Endothelial cell of umbilical vein (primary cell): ENCODE measurements at regions of chr12 and their contacts with region 1.

Region 1: GRCh38 chr12:121296618-121297434 is at the start of gene CAMKK2:
- DNase-seq: peak; percentile 80
- H3K4me3 ChIP-seq: peak within 1 kb of the TSS; percentile 77 to 88 (median 77)
- H3K27ac ChIP-seq: peak within 1 kb of the TSS; percentile 63
- H3K4me1 ChIP-seq: peaks cover 16% of the 10 kb centered on the region
- H3K27me3 ChIP-seq: no peaks in the 10 kb centered on the region
- CTCF ChIP-seq: peak; percentile 3 to 21
- POLR2A ChIP-seq: no peak
- total RNA-seq, gene CAMKK2: 41.8 and 45.0 TPM in 2 replicates

Region 2: DNA sequence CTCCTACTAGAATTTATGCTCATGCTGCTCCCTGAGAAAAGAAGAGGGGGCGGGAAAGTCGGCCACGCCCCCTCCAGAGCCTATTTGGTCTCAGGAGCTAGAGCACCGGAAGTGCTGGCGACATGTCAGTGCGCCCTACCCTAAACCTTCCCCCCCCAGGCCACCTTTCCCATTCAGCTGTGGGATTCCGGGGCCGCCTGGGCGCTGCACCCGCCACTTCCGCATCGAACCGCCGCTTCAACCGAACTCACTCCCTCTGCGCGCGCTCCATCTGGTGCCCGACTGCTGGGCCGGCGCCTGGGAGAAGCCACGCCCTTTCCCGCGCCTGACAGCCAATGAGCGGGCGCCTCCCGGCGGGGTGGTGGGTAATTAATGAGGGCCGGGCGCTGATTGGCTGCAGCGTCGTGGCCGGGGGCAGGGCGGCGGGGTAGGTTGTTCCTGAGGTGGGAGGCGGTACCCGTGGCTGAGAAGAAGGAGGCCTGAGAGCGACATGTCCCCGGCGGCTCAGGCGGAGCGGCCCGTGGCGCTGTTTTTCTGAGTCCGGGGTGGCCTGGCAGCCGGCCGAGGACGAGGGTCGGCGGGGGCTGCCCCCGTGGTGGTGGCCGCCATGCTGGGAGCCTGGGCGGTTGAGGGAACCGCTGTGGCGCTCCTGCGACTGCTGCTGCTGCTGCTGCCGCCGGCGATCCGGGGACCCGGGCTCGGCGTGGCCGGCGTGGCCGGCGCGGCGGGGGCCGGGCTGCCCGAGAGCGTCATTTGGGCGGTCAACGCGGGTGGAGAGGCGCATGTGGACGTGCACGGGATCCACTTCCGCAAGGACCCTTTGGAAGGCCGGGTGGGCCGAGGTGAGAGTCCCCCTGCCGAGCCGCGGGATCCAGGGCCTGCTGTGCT is 609.9 kb before region 1 on chr12 and contains the start of gene MLEC:
- CTCF ChIA-PET with region 1: no interaction called
- POLR2A ChIA-PET with region 1: no interaction called
- dilution Hi-C with region 1: no loop called
- intact Hi-C with region 1: no loop called
- DNase-seq: peak; percentile 97
- H3K4me3 ChIP-seq: peak within 1 kb of the TSS; percentile 77 to 88 (median 80)
- H3K27ac ChIP-seq: peak within 1 kb of the TSS; percentile 86
- H3K4me1 ChIP-seq: peaks cover 27% of the 10 kb centered on the region
- H3K27me3 ChIP-seq: no peaks in the 10 kb centered on the region
- CTCF ChIP-seq: no peak
- POLR2A ChIP-seq: peak; percentile 72
- total RNA-seq, gene MLEC: 132 and 144 TPM in 2 replicates

Region 3: DNA sequence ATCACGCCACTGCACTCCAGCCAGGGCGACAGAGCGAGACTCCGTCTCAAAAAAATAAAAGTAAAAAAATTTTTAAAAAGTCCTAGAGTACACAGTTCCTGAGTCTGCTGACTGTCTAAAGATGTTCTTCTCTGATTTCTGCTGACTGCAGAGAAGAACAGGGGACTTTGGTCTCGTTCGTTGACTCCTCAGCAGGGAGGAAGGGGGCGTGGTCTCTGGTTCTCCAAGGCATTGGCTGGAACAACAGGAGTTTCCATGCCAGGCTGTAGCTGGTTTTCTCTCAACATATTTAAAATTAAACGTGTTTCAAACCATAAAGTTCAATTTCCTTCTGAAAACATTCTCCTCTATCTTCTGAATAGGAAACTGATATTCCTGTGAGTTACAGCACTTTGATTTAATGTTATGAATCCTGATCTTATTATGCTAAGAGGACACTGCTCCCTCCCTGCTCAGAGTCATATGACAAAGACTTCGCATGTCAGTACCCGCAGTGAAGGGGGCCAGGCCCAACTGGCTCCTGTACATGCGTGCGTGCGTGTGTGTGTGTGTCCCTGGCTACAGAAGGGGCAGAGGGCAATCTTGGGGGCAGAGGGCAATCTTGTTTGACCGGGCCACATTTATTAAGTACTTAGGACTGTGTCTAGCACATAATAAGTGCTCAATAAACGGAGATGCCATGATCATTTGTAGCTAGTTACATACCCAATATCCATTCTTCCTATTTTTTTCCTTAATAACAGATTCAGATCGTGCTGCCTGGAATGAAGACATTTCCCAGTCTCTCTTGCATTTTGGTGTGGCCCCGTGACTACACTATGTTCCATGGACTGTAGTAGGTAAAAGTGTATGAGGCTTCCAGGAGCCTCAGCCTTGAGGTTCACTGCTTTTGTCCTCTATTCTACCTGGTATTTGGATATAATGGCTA is 335.0 kb before region 1 on chr12:
- CTCF ChIA-PET with region 1: no interaction called
- POLR2A ChIA-PET with region 1: no interaction called
- dilution Hi-C with region 1: no loop called
- intact Hi-C with region 1: no loop called
- DNase-seq: no peak
- H3K4me3 ChIP-seq: no peak overlapping the region
- H3K27ac ChIP-seq: no peak overlapping the region
- H3K4me1 ChIP-seq: no peaks in the 10 kb centered on the region
- H3K27me3 ChIP-seq: no peaks in the 10 kb centered on the region
- CTCF ChIP-seq: no peak
- POLR2A ChIP-seq: no peak

Region 4: GRCh38 chr12:121248622-121249021 is 48.2 kb before region 1 on chr12:
- CTCF ChIA-PET with region 1: no interaction called
- POLR2A ChIA-PET with region 1: no interaction called
- dilution Hi-C with region 1: no loop called
- intact Hi-C with region 1: loop called (anchors 5 kb)
- DNase-seq: no peak
- H3K4me3 ChIP-seq: no peak overlapping the region
- H3K27ac ChIP-seq: no peak overlapping the region
- H3K4me1 ChIP-seq: no peaks in the 10 kb centered on the region
- H3K27me3 ChIP-seq: no peaks in the 10 kb centered on the region
- CTCF ChIP-seq: no peak
- POLR2A ChIP-seq: no peak

Region 5: DNA sequence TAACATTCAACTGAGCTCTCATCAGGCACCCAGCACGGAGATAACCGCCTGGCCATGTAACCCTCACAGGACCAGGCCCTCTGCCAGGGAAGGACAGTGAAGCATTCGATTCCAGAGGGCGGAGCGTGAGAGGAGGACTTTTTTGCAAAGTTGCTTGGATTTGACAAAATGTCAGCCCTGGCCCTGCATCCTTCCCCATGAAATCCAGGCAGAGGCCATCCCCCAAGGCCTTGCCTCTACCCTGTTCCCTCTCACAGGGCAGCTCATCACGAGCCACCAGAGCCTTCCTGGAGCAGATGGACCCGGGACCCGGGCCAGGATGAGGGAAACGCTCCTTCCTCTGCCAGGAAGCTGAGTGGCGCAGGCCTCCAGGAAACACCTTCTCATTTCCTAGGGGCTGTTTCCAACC is 17.3 kb before region 1 on chr12:
- CTCF ChIA-PET with region 1: interaction called, 7 read pairs
- POLR2A ChIA-PET with region 1: no interaction called
- dilution Hi-C with region 1: no loop called
- intact Hi-C with region 1: loop called (anchors 1 kb)
- DNase-seq: peak; percentile 61
- H3K4me3 ChIP-seq: no peak overlapping the region
- H3K27ac ChIP-seq: peak overlapping the region; percentile 65
- H3K4me1 ChIP-seq: peaks cover 27% of the 10 kb centered on the region
- H3K27me3 ChIP-seq: no peaks in the 10 kb centered on the region
- CTCF ChIP-seq: no peak
- POLR2A ChIP-seq: no peak

Region 6: DNA sequence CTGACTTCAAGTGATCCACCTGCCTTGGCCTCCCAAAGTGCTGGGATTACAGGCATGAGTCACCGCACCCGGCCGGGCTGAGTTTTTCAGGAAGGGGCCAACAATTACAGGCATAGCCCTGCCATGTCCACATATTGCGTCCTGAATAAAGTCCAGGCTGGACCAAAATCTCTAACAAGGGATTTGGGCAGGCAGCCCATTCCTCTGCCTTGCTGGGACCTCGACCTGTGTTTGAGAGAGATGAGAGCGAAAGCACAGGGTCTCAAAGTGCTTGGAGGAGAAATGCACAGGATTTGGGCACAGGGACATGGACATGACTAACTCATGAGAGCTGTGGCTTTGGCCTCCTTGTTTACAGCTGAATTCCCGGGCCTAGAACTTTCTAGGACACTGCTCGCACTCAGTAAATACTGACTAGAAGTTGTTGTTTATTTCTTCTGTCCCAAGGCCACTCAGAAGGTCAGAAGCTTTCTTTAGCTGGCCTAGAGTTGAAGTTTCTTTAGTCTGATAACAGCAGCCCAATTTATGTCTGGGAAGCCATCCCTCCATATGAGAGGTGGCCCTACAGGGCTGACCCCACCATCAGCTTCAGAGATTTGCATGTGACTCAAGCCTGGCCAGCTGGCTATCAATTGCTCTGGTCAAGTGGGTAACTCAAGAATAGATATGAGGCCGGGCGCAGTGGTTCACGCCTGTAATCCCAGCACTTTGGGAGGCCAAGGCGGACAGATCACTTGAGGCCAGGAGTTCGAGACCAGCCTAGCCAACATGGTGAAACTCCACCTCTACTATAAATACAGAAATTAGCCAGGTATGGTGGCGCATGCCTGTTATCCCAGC is 12.1 kb before region 1 on chr12:
- CTCF ChIA-PET with region 1: interaction called, 5 read pairs
- POLR2A ChIA-PET with region 1: no interaction called
- dilution Hi-C with region 1: no loop called
- intact Hi-C with region 1: loop called (anchors 1 kb)
- DNase-seq: peak; percentile 26
- H3K4me3 ChIP-seq: no peak overlapping the region
- H3K27ac ChIP-seq: no peak overlapping the region
- H3K4me1 ChIP-seq: peaks cover 9% of the 10 kb centered on the region
- H3K27me3 ChIP-seq: no peaks in the 10 kb centered on the region
- CTCF ChIP-seq: no peak
- POLR2A ChIP-seq: no peak

Region 7: GRCh38 chr12:121351820-121352681 is 55.2 kb after region 1 on chr12 and contains the start of gene ANAPC5:
- CTCF ChIA-PET with region 1: no interaction called
- POLR2A ChIA-PET with region 1: interaction called, 3 read pairs
- dilution Hi-C with region 1: no loop called
- intact Hi-C with region 1: loop called (anchors 2 kb)
- DNase-seq: peak; percentile 99
- H3K4me3 ChIP-seq: peak within 1 kb of the TSS; percentile 54 to 85 (median 56)
- H3K27ac ChIP-seq: peak within 1 kb of the TSS; percentile 40
- H3K4me1 ChIP-seq: peaks cover 10% of the 10 kb centered on the region
- H3K27me3 ChIP-seq: no peaks in the 10 kb centered on the region
- CTCF ChIP-seq: peak in 1 of 2 donors; percentile 10
- POLR2A ChIP-seq: peak; percentile 94
- total RNA-seq, gene ANAPC5: 129 and 133 TPM in 2 replicates

Region 8: GRCh38 chr12:121399391-121400331 is 102.8 kb after region 1 on chr12 and contains the start of gene RNF34:
- CTCF ChIA-PET with region 1: interaction called, 3 read pairs
- POLR2A ChIA-PET with region 1: no interaction called
- dilution Hi-C with region 1: no loop called
- intact Hi-C with region 1: loop called (anchors 5 kb)
- DNase-seq: peak; percentile 98
- H3K4me3 ChIP-seq: peak within 1 kb of the TSS; percentile 68 to 86 (median 86)
- H3K27ac ChIP-seq: peak within 1 kb of the TSS; percentile 55
- H3K4me1 ChIP-seq: peaks cover 19% of the 10 kb centered on the region
- H3K27me3 ChIP-seq: no peaks in the 10 kb centered on the region
- CTCF ChIP-seq: no peak
- POLR2A ChIP-seq: peak; percentile 97
- total RNA-seq, gene RNF34: 51.1 and 57.1 TPM in 2 replicates

Region 9: DNA sequence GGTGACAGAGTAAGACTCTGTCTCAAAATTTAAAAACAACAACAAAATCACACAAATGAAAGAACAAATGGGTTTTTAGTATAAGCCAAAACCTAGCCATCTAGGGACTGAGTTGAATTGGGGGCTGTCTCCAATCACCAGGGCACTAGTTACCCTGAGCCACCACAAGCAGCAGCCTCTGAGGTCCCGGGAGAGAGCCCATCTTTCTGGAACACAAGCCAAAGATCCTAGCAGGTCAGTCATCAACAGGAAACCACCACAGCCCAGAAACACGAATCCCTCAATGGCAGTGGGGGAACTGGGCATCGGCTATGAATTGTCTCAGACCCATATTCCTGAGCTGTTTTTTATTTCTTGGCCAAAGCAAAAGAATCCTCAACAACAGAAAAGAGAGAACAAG is 208.7 kb after region 1 on chr12:
- CTCF ChIA-PET with region 1: no interaction called
- POLR2A ChIA-PET with region 1: no interaction called
- dilution Hi-C with region 1: no loop called
- intact Hi-C with region 1: no loop called
- DNase-seq: peak; percentile 21
- H3K4me3 ChIP-seq: no peak overlapping the region
- H3K27ac ChIP-seq: no peak overlapping the region
- H3K4me1 ChIP-seq: no peaks in the 10 kb centered on the region
- H3K27me3 ChIP-seq: no peaks in the 10 kb centered on the region
- CTCF ChIP-seq: no peak
- POLR2A ChIP-seq: no peak

Region 10: DNA sequence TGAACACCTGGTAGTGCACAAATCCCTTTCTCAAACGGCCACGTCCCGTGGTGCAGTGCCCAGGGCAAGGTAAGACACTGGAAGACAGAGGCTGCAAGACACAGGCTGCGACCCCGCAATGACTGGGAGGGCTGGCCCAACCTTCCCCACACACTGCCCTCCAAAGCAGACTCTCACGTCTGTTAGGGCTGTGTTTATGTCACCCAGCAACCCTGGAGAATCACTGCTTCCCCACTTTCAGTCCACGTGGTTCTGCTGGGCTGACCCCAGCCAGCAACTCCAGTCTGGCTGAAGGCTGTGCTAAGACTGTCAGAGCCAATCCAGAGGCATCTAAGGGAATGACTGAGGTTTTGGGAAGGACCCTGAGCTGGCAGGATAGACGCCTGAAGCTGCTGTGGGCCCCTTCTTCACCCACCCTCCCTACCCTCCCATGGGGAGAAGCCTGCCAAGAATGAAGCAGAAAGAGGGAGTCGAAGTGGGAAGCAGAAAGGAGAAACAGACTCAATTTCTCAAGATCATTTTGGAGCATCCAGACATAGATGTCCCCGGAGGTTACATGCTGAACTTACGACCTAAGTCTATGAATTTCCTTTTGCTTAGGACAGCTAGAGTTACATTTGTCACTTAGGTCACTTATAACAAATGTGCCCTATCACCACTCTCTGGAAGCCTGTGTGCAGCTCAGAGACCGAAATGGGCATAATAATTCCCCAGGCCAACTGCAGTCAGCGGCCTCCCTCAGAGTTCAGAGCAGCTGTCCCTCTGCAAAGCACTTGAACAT is 272.3 kb after region 1 on chr12:
- CTCF ChIA-PET with region 1: no interaction called
- POLR2A ChIA-PET with region 1: no interaction called
- dilution Hi-C with region 1: no loop called
- intact Hi-C with region 1: no loop called
- DNase-seq: no peak
- H3K4me3 ChIP-seq: no peak overlapping the region
- H3K27ac ChIP-seq: no peak overlapping the region
- H3K4me1 ChIP-seq: no peaks in the 10 kb centered on the region
- H3K27me3 ChIP-seq: no peaks in the 10 kb centered on the region
- CTCF ChIP-seq: no peak
- POLR2A ChIP-seq: no peak